Activated CD4-positive, alpha-beta T cell treated with anti-CD3 and anti-CD28 coated beads for 36 hours (primary cell): ENCODE measurements at regions of chr12 and their contacts with region 1.

Region 1: GRCh38 chr12:12645485-12645884 is 33.8 kb downstream of the CREBL2 start:
- DNase-seq: peak; percentile 51
- ATAC-seq: peak; percentile 75
- H3K4me3 Mint-ChIP-seq: no peak overlapping the region
- H3K27ac Mint-ChIP-seq: peak overlapping the region; percentile 58
- H3K4me1 Mint-ChIP-seq: peaks cover 21% of the 10 kb centered on the region
- H3K27me3 Mint-ChIP-seq: no peaks in the 10 kb centered on the region

Region 2: DNA sequence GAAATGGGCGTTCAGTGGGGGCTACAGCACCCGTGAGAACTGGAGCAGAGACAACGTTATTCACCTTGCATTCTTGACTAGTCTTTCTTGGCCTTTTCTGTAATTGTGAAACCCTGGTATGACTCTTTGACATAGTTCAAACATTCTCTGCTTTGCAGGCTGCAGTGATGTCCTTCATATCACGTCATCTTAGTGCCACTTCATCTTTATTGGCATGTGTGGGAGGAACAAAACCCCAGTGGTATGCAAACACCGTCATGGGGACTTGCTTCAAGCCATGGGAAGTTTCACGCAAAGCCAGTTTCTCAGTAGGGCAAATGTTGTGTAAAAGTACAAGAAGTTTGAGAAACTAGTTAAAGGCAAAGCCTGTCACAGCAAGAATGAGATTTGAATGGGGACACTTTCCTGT is 62.6 kb before region 1 on chr12:
- CTCF ChIA-PET with region 1: interaction called, 3 read pairs
- POLR2A ChIA-PET with region 1: no interaction called
- intact Hi-C with region 1: loop called in 1 of 2 experiments (anchors 2 kb)
- DNase-seq: peak; percentile 78
- ATAC-seq: peak; percentile 96
- H3K4me3 Mint-ChIP-seq: no peak overlapping the region
- H3K27ac Mint-ChIP-seq: peak overlapping the region; percentile 92
- H3K4me1 Mint-ChIP-seq: peaks cover 45% of the 10 kb centered on the region
- H3K27me3 Mint-ChIP-seq: no peaks in the 10 kb centered on the region

Region 3: DNA sequence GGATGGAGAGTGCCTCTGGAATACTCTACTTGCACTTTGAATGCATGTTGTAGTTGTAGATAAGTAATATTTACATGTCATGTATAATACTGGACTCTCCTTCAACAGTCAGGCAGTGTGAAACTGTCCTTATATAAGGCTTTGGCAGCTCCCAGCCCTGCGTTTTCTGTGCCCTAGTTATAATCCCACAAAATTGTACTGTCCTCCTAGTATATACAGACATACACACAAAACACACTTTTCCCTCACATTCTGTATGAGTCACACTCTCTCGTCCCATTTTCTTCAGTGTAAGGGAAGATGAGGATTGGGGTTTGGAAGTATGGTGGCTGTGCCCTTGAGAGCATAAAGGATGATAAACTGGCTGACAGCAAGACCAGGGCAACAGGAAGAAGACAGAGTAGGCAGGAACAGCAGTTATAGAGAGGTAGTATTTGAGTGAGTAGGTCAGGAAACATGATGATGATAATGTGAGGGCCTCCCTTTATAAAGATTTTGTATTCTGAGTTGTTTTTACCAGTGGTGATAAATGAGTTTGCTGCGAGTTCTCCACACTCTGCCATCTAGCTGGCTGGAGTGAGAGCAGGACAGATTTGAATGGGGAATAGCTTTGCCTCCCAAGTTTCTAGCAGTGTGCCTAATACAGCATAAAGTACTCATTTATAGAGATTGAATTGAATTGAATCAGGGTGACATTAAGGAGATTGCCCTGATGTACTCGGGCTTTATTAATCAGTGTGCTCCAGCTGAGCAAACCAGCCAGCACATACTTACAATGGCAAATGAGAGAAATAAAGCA is 28.8 kb before region 1 on chr12:
- CTCF ChIA-PET with region 1: interaction called, 10 read pairs
- POLR2A ChIA-PET with region 1: no interaction called
- intact Hi-C with region 1: loop called in 1 of 2 experiments (anchors 1 kb)
- DNase-seq: no peak
- ATAC-seq: peak; percentile 45
- H3K4me3 Mint-ChIP-seq: no peak overlapping the region
- H3K27ac Mint-ChIP-seq: peak overlapping the region; percentile 90
- H3K4me1 Mint-ChIP-seq: peaks cover 62% of the 10 kb centered on the region
- H3K27me3 Mint-ChIP-seq: no peaks in the 10 kb centered on the region

Region 4: GRCh38 chr12:12704593-12705230 is 59.2 kb after region 1 on chr12:
- CTCF ChIA-PET with region 1: interaction called, 6 read pairs
- POLR2A ChIA-PET with region 1: interaction called, 3 read pairs
- intact Hi-C with region 1: loop called in 1 of 2 experiments (anchors 2 kb)
- DNase-seq: peak; percentile 58
- ATAC-seq: peak; percentile 80
- H3K4me3 Mint-ChIP-seq: no peak overlapping the region
- H3K27ac Mint-ChIP-seq: no peak overlapping the region
- H3K4me1 Mint-ChIP-seq: peaks cover 18% of the 10 kb centered on the region
- H3K27me3 Mint-ChIP-seq: no peaks in the 10 kb centered on the region

Region 5: GRCh38 chr12:12736759-12737676 is 91.5 kb after region 1 on chr12:
- CTCF ChIA-PET with region 1: interaction called, 27 read pairs
- POLR2A ChIA-PET with region 1: interaction called, 3 read pairs
- intact Hi-C with region 1: no loop called
- DNase-seq: peak; percentile 65
- ATAC-seq: peak; percentile 87
- H3K4me3 Mint-ChIP-seq: peak overlapping the region; percentile 32
- H3K27ac Mint-ChIP-seq: peak overlapping the region; percentile 75
- H3K4me1 Mint-ChIP-seq: peaks cover 35% of the 10 kb centered on the region
- H3K27me3 Mint-ChIP-seq: no peaks in the 10 kb centered on the region

Region 6: GRCh38 chr12:12870454-12870853 is 225.0 kb after region 1 on chr12:
- CTCF ChIA-PET with region 1: no interaction called
- POLR2A ChIA-PET with region 1: no interaction called
- intact Hi-C with region 1: no loop called
- DNase-seq: no peak
- ATAC-seq: no peak
- H3K4me3 Mint-ChIP-seq: no peak overlapping the region
- H3K27ac Mint-ChIP-seq: no peak overlapping the region
- H3K4me1 Mint-ChIP-seq: no peaks in the 10 kb centered on the region
- H3K27me3 Mint-ChIP-seq: no peaks in the 10 kb centered on the region